ENCODE measurements at regions of chr19 and their contacts with region 1.

Region 1: DNA sequence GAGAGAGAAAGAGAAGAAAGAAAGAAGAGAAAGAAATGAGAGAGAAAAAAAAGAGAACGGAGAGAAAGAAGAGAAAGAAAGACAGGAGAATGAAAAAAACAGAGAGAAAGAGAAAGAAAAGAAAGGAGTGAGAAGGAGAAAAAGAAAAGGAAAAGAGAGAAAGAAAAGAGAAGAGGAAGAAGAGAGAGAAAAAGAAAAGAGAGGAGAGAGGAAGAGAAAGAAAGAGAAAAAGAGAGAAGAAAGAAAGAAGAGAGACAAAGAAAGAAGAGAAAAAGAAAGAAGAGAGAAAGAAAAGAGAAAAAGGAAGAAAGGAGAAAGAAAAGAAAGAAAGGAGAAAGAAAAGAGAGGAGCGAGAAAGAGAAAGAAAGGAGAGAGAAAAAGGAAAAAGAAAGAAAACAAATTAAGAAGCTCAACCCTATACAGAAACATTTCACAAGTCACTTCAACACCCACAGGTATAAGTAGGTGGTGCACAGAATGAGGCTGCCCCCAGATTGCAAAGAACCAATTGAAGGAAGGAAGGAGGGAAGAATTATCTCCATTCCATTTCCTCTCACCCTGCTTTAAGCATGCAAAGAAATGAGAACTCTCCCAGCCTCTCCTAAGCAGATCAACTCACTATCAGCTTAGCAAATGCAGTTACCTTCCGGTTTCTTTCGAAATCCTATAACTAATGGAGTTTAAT is 98.8 kb upstream of the CACNA1A start:
- DNase-seq: no peak
- ATAC-seq: no peak

Region 2: DNA sequence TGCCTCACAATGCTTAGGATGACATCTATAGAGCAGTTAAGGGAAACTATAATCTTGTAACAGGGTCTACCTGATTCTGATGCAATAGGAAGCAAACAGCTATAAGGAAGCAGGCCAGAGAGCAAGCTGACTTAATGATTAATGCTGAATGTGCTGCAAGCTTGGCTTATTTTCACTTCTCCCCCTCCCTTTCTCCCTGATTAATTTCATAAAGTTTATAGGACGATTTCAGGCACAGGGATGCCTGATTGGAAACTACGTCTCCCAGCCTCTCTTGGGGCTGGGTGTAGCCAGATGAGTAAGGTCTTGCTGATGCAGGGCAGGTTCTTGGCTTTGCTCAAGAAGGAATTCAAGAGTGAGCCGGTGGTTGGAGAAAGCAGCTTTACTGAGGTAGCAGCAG is 76.5 kb after region 1 on chr19:
- intact Hi-C with region 1: no loop called
- DNase-seq: no peak
- ATAC-seq: no peak

Region 3: DNA sequence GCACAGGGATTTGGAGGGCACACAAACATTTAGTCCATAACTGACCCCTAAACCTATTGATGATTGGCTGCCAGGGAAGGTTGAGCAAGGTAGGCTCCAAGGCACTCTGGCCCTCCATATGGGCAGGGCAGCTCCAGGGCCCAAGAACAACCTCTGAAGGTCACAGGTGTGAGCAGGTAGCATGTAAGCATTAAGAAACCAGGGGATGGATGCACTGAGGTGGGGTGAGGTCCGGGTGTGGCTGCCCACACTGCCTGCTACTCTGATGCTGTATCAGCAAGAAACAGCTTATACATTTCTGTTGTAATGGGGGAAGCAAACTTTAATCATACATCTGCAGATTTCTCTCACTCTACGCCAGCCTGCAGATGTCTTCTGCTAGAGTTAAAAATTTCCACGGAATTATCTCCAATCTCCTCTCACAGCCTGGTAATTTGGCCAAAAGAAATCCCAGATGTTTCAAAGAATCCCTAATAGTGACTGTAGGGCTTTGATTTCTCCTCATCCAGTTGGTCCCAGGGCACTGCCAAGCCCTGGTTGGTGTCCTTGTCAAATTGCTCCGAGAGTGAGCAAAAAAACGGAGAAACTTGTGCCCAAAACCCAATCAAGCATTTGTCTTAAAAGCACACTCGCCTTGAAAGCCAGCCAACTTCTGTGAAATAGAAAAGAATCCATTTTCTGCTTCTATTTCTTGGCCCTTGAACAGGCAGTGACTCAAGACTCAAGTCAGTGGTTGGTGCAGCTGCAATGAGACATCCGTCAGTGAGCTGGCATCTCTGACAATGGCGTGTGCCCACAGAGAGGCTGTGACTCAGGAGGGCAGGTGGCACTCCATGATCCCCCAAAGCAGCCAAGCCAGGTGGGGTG is 86.8 kb after region 1 on chr19:
- intact Hi-C with region 1: no loop called
- DNase-seq: no peak
- ATAC-seq: no peak

Region 4: GRCh38 chr19:13718733-13719132 is 113.7 kb after region 1 on chr19:
- intact Hi-C with region 1: loop called in 1 of 2 experiments (anchors 10 kb)
- DNase-seq: peak; percentile 35 to 64
- ATAC-seq: peak; percentile 90